Activated naive CD4-positive, alpha-beta T cell treated with anti-CD3 and anti-CD28 coated beads for 36 hours (primary cell): ENCODE measurements at regions of chr7 and their contacts with region 1.

Region 1: GRCh38 chr7:92904292-92905131 is 68.1 kb upstream of the CDK6 start:
- DNase-seq: peak; percentile 96
- H3K4me3 Mint-ChIP-seq: peak overlapping the region; percentile 18
- H3K27ac Mint-ChIP-seq: peak overlapping the region; percentile 84
- H3K4me1 Mint-ChIP-seq: peaks cover 26% of the 10 kb centered on the region
- H3K27me3 Mint-ChIP-seq: peaks cover 5% of the 10 kb centered on the region

Region 2: GRCh38 chr7:92292981-92293380 is 611.5 kb before region 1 on chr7:
- CTCF ChIA-PET with region 1: no interaction called
- intact Hi-C with region 1: no loop called
- DNase-seq: no peak
- H3K4me3 Mint-ChIP-seq: no peak overlapping the region
- H3K27ac Mint-ChIP-seq: no peak overlapping the region
- H3K4me1 Mint-ChIP-seq: peaks cover 29% of the 10 kb centered on the region
- H3K27me3 Mint-ChIP-seq: no peaks in the 10 kb centered on the region

Region 3: DNA sequence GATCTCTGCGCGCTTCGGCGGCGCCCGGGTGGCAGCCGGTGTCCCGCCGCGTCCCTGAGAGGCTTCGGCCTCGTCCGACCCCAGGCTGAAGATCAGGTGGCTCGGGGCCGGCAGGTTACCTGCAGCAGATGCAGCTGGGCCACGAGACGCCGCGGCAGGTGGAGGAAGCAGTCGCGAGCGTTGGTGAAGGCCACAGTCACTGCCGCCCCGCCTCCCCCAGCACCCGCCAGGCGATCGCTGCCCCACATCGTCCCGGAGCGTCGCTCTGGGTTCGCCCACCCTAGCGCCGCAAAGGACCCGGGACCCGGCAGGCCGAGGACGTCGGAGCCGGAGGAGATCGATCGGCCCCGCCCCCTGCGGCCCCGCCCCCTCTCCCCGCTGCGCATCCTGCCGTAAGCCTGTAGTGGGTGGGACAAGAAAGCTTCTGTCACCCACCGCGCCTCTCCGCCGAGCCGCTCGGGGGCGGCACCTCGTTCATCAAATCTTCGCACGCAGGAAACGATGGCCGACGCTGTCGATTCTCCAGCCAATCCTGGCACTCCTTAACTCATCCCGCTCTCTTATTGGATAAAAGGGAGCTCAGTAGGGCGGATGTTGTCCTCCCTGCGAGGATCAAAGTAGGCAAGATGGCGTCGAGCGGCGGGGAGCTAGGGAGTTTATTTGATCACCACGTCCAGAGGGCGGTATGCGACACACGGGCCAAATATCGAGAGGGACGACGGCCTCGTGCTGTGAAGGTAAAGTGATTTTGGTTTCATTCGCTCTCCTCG is 376.1 kb before region 1 on chr7 and contains the starts of genes PEX1 and RBM48:
- CTCF ChIA-PET with region 1: no interaction called
- intact Hi-C with region 1: loop called (anchors 1 kb)
- DNase-seq: peak; percentile 97
- H3K4me3 Mint-ChIP-seq: peak within 1 kb of the TSS; percentile 84
- H3K27ac Mint-ChIP-seq: peak within 1 kb of the TSS; percentile 91
- H3K4me1 Mint-ChIP-seq: peaks cover 22% of the 10 kb centered on the region
- H3K27me3 Mint-ChIP-seq: no peaks in the 10 kb centered on the region
- total RNA-seq, gene PEX1: 12.9 to 13.2 TPM
- total RNA-seq, gene RBM48: 11.3 to 12.9 TPM

Region 4: DNA sequence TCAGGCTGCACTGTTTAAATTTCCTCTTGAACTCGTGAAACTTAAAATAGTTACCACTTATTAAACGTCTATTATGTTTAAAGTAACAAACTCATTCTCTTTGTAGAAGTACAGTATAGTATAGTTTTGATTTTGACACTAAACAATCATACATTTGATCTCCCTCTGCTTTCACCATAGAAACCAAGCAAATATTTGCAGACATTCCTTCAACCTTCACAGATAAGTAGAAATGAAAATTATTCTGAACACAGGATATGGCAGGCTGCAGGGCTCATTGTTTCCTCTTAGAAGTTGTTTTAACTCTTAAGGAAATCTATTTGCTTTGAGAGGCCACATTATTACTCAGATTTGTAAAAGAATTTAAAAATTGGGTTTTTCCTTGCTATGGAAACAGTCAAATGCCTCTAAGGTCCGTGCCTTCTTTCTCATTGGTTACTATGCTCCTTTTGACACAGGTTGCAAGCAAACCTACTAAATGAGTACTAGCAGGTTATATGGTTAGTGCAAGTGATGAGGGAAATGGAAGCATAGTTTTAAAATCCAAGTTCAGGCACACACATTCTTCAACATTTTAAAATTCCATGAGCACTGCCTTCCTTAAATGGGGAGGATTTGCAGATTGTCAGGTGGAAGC is 221.5 kb before region 1 on chr7:
- CTCF ChIA-PET with region 1: no interaction called
- intact Hi-C with region 1: loop called (anchors 1 kb)
- DNase-seq: peak; percentile 44
- H3K4me3 Mint-ChIP-seq: peak overlapping the region; percentile 7
- H3K27ac Mint-ChIP-seq: peak overlapping the region; percentile 90
- H3K4me1 Mint-ChIP-seq: peaks cover 79% of the 10 kb centered on the region
- H3K27me3 Mint-ChIP-seq: no peaks in the 10 kb centered on the region

Region 5: GRCh38 chr7:92768501-92769393 is 135.8 kb before region 1 on chr7:
- CTCF ChIA-PET with region 1: no interaction called
- intact Hi-C with region 1: loop called (anchors 1 kb)
- DNase-seq: peak; percentile 76
- H3K4me3 Mint-ChIP-seq: peak overlapping the region; percentile 48
- H3K27ac Mint-ChIP-seq: peak overlapping the region; percentile 92
- H3K4me1 Mint-ChIP-seq: peaks cover 70% of the 10 kb centered on the region
- H3K27me3 Mint-ChIP-seq: no peaks in the 10 kb centered on the region

Region 6: GRCh38 chr7:92944633-92945032 is 40.1 kb after region 1 on chr7:
- CTCF ChIA-PET with region 1: no interaction called
- intact Hi-C with region 1: loop called (anchors 1 kb)
- DNase-seq: no peak
- H3K4me3 Mint-ChIP-seq: no peak overlapping the region
- H3K27ac Mint-ChIP-seq: no peak overlapping the region
- H3K4me1 Mint-ChIP-seq: peaks cover 10% of the 10 kb centered on the region
- H3K27me3 Mint-ChIP-seq: peaks cover 2% of the 10 kb centered on the region

Region 7: DNA sequence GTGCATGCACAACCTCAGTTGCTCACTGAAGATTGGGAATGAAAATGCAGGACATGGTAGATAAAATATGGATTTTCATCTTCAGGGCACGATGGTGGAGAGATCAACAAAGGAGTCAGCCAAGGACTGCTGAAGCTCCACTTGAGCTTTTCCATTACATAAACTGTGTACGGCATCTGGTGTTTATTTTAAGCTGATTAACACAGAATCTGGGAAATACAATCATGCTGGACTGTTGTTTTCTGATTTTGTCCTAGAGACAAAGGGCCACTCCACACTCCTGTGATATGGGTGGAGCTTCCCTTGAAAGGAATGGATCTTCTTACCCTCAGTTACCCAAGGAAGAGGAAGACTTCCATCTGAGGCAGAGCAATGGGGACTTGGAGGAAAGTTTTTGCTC is 92.6 kb after region 1 on chr7:
- CTCF ChIA-PET with region 1: no interaction called
- intact Hi-C with region 1: no loop called
- DNase-seq: no peak
- H3K4me3 Mint-ChIP-seq: no peak overlapping the region
- H3K27ac Mint-ChIP-seq: no peak overlapping the region
- H3K4me1 Mint-ChIP-seq: no peaks in the 10 kb centered on the region
- H3K27me3 Mint-ChIP-seq: peaks cover 11% of the 10 kb centered on the region

Region 8: DNA sequence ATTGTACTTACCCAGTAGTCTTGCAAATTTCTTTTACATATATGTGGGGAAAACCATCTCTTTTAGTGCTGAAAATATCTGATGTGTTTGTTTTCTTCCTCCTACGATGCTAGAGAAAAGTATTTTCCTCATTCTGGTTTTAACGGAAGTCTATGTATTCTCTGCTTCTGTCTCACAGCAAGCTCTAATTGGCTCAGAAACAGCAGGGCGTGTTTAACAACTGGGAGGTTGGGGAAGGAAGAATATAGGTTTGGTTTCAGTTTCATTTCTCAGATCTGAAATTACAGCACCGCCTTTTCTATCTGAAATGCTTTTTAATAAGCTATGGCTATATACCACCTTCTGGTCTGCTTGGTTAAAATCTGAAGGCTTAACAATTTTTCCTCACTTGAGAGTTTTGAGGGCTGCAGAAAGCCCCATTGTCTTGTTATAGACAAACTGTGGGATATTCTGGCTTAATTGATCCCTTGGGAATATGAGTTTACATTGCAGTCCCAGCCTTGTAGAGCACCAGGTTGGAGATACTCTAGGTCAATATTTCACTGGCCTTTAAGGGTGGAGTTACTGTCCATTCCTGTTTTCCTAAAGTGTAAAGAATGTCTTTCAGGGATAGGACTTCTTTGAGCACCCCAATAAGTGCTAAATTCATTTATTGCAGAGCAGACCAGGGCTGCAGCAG is 213.5 kb after region 1 on chr7 and contains the start of gene SAMD9:
- CTCF ChIA-PET with region 1: no interaction called
- intact Hi-C with region 1: loop called (anchors 1 kb)
- DNase-seq: peak; percentile 70
- H3K4me3 Mint-ChIP-seq: peak within 1 kb of the TSS; percentile 71
- H3K27ac Mint-ChIP-seq: peak within 1 kb of the TSS; percentile 65
- H3K4me1 Mint-ChIP-seq: peaks cover 47% of the 10 kb centered on the region
- H3K27me3 Mint-ChIP-seq: no peaks in the 10 kb centered on the region
- total RNA-seq, gene SAMD9: 2.9 to 3.1 TPM